ENCODE measurements at regions of chr10 and their contacts with region 1.

Region 1: GRCh38 chr10:93475861-93476269 is 6.3 kb downstream of the MYOF start:
- DNase-seq: peak in 1 of 2 donors; percentile 54
- ATAC-seq: peak; percentile 83

Region 2: DNA sequence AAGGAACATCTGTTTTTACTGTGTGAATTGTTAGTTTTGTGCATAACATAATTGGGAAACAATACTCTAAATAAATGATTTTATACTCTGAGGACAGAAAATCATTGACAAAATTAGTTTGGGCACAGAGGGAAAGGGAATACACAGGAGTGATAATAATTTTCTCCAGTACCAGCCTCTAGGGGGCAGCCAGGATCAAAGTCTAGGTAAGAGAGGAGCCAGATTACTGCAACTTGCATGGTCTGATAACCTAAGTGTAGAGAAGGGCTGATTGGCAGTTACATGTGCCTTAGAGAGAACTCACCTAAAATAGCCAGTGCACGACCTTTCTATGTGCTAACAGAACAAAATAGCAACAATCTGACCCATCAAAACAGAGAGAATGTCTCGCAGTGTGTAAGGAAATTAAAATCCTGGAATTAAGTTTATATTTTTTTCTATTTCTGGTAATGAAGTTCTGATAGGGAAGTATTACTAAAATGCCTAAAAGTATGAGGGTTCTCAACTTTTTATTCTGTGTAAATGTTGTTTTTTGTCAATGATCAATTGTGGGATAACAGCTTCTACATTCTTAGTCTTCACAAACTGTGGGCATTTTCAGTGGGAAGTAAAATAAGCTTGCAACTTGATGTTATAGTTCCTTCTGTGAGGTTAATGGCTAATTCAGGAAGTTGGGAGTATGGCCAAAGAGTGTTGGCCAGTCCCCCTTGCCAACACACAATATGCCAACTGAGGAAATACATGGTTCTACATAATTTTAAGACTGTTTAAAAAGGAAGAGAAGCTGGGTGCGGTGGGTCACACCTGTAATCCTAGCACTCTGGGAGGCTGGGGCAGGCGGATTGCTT is 561.2 kb before region 1 on chr10:
- intact Hi-C with region 1: no loop called
- DNase-seq: peak in 1 of 2 donors; percentile 40
- ATAC-seq: peak; percentile 85

Region 3: DNA sequence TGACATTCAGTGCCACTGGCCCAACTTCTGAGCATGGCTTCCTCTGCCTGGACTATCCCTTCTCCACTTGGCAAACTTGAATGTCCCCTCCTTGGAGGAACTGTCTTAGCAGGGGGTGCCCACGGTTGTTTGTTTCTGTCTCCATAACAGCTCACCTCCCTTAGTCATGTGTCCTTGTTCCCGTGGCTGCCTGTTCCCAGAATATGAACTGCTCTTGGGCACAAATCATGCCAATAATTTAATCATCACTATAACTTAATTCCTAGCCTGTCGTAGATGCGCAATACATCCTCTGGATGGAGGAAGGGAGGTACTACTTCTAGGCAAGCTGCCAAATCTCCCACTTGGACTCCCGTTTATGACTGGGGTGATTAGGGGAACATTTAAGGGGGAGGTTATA is 166.8 kb before region 1 on chr10:
- intact Hi-C with region 1: no loop called
- DNase-seq: no peak
- ATAC-seq: no peak

Region 4: GRCh38 chr10:93437088-93437945 is 38.5 kb before region 1 on chr10:
- intact Hi-C with region 1: loop called in 1 of 2 experiments (anchors 5 kb)
- DNase-seq: peak in 1 of 2 donors; percentile 76
- ATAC-seq: peak; percentile 34